ENCODE measurements at regions of chrX and their contacts with region 1.

Region 1: DNA sequence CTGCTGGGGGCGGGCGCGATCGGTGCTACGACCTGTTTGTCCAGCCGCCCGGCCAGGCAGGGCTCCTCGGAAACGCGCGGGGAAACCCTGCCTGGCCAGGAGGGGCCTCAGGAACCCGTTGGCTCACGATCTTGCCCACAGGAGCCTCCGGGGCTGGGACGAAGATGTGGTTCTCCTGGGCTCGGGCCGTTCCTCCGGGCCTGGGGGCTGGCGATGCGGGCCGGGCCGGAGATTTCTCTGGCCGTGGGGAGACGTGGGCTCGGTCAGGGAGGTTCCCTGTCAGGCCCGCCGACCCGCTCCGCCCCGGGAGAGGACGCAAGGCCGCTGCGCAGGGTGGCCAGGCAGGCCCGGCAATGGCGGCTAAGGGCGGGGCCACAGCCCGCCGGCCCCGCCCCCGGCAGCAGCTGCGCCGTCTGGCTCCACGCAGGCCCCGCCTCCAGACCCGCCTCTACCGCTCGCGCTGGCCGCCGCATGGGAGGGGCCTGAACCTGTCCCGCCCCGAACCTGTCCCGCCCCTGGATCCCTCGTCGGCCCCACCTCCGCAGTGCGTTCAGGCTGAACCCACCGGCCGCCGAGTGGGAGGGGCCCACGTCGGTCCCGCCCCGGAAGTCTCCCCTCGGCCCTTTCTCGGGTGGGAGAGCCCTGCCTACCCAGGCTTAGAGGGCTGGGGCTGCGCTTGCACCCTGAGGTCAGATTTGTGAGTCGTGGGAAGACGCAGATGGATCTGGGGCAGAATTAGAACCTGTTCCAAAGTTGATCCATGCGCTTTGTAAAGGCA is at the start of gene FAM3A:
- DNase-seq: peak; percentile 97
- ATAC-seq: peak; percentile 96
- total RNA-seq, gene FAM3A: 62.1 TPM

Region 2: DNA sequence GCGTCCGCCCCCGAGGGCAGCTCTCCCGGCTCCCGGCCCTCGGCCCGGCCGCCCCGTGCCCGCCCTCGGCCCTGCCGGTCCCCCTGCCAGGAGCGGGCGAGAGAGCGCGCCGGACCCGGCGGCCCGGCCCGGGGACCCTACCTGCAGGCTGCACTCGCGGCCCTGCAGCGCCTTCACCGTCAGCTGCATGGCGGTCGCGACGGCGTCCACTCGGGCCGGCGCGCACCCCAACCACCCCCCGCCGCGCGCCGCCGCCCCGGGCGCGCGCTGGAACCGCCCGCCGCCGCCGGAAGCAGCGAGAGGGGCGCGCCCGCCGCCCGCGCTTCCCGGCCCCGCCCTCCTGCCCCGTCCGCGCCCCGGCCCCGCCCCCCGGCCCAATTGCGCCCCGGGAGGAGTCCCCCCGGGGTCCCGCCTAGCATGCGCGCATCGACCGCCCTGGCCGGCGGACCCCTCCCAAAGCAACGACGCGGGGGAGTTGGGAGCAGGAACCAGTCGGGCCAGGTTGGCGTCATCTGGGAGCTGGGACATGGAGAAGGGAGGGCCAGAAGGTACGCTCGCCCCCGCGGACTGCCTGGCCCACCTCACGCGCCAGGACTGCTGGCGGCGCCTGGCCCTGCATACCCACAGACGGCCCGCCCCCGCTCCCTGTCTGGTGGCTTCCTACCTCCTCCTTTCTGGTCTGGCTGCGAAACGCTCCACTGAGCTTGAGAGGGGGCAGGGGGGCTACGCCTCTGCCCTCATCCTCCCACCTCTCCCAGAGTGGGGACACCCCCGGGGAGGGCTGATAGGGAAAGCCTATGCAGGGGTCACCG is 29.5 kb before region 1 on chrX and contains the start of gene UBL4A:
- intact Hi-C with region 1: loop called (anchors 2 kb)
- DNase-seq: peak; percentile 86
- ATAC-seq: peak; percentile 35
- total RNA-seq, gene UBL4A: 58.4 TPM

Region 3: GRCh38 chrX:154829926-154830442 is 313.9 kb after region 1 on chrX:
- intact Hi-C with region 1: no loop called
- DNase-seq: no peak
- ATAC-seq: no peak